B cell (primary cell): ENCODE measurements at regions of chr11 and their contacts with region 1.

Region 1: GRCh38 chr11:13772223-13773046 is 104.0 kb downstream of the FAR1 start:
- DNase-seq: peak; percentile 79
- ATAC-seq: peak; percentile 65
- H3K4me3 ChIP-seq: no peak overlapping the region
- H3K4me3 Mint-ChIP-seq: no peak overlapping the region
- H3K27ac ChIP-seq: no peak overlapping the region
- H3K27ac Mint-ChIP-seq: no peak overlapping the region
- H3K4me1 ChIP-seq: peaks cover 0 to 7% of the 10 kb centered on the region in 2 donors
- H3K4me1 Mint-ChIP-seq: peaks cover 6% of the 10 kb centered on the region
- H3K27me3 ChIP-seq: peaks cover 0 to 4% (median 0%) of the 10 kb centered on the region in 4 experiments
- H3K27me3 Mint-ChIP-seq: peaks cover 17% of the 10 kb centered on the region
- CTCF ChIP-seq: peak; percentile 79

Region 2: DNA sequence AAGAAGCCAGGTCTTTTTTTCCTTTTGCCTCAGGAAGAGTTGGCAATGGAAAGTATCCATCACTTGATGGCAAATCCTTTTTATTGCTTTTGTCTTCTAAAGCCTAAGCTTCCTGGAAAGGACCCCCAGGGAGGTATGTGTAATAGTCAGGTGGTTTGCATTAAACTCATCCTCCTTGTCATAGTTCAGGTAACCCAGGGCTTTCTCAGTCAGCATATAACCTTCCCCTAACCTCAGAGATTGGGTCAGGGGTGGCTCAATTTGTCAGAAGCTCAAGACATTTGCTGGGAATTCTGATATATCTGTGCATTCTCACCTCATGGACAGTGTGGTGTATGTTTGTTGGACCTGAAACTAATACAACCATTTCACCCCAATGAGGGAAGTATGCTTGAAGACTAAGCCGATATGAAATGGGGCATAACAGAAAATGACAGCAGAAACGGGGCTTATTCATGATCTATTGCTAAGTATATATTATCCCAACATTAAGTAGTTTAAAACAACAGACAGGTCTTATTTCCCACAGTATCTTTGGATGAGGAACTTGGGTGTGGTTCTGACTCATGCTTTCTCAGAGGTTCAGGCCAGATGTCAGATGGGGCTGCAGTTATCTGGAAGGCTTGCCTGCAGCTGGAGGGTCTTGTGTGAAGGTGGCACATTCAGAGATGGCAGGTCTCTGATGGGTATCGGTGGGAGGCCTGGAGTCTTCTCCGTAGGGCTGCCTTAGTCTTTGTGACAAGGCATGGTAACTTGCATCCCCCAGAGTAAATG is 54.3 kb after region 1 on chr11:
- CTCF ChIA-PET with region 1: no interaction called
- POLR2A ChIA-PET with region 1: no interaction called
- intact Hi-C with region 1: no loop called
- DNase-seq: no peak
- ATAC-seq: no peak
- H3K4me3 ChIP-seq: no peak overlapping the region
- H3K4me3 Mint-ChIP-seq: no peak overlapping the region
- H3K27ac ChIP-seq: no peak overlapping the region
- H3K27ac Mint-ChIP-seq: no peak overlapping the region
- H3K4me1 ChIP-seq: no peaks in the 10 kb centered on the region
- H3K4me1 Mint-ChIP-seq: no peaks in the 10 kb centered on the region
- H3K27me3 ChIP-seq: no peaks in the 10 kb centered on the region
- H3K27me3 Mint-ChIP-seq: peaks cover 22% of the 10 kb centered on the region
- CTCF ChIP-seq: no peak

Region 3: DNA sequence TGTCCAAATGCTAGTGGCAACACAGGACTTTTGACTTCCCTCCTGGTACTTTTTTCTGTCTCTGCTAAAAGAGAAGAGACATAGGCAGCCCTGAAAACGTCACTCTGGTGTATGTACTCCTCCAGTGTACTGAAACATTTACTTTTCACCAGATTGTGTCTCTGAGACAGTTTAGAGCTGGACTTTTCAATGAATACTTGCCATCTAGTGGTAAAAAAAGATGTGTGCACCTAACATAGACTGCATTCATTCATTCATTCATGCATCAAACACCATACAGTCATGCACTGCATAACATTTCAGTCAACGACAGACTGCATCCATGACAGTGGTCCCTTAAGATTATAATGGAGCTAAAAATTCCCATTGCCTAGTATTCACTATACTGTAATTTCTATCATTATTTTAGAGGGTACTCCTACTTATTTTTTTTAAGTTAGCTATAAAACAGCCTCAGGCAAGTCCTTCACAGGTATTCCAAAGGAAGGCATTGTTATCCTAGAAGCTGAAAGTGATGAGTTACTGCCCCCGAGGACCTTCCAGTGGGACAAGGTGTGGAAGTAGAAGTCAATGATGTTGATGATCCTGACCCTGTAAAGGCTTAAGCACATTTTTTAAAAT is 376.3 kb after region 1 on chr11:
- CTCF ChIA-PET with region 1: interaction called, 35 read pairs
- POLR2A ChIA-PET with region 1: no interaction called
- intact Hi-C with region 1: loop called (anchors 1 kb)
- DNase-seq: peak; percentile 30
- ATAC-seq: peak; percentile 14
- H3K4me3 ChIP-seq: no peak overlapping the region
- H3K4me3 Mint-ChIP-seq: no peak overlapping the region
- H3K27ac ChIP-seq: no peak overlapping the region
- H3K27ac Mint-ChIP-seq: no peak overlapping the region
- H3K4me1 ChIP-seq: no peaks in the 10 kb centered on the region
- H3K4me1 Mint-ChIP-seq: no peaks in the 10 kb centered on the region
- H3K27me3 ChIP-seq: peaks cover 0 to 4% (median 2%) of the 10 kb centered on the region in 4 experiments
- H3K27me3 Mint-ChIP-seq: peaks cover 23% of the 10 kb centered on the region
- CTCF ChIP-seq: peak; percentile 63

Region 4: DNA sequence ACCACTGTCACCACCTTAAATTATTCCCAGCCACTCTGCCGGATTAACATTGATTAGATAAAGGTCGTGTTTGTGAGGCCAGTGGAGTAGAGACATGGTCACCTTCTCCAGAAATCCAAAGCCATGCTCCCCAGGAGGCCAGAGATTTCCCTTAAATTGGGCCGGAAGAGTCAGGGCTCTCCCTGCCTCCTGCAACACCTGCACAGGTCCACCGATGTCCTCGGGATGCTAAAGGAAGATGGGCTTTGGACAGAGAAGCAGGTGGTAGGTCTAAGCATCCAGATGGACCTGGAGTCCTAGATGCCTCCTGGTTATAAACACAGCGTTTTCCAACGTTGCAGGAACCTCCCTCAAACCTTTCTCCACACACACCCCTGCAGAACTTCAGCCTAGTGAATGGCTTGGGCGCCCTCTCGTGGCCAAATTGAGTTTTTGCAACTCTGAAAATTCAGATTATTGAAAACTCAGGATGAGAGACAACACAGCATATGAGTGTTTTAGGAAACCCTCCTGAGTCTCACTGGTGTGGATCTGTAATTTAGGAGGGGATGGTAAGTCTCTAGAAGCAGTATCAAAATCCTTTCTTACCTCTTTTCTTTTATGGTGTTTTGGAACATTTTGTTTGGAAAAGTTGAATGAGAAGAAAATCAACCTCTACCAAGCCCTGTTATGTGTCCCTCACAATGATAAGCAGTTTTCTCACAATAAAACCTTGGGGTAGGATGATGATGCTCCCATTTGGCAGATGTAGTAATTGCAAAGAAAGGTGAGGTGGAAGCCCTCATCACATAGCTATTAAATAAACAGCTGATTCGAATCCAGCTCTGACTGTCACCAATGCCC is 476.9 kb after region 1 on chr11:
- CTCF ChIA-PET with region 1: interaction called, 40 read pairs
- POLR2A ChIA-PET with region 1: no interaction called
- intact Hi-C with region 1: loop called (anchors 1 kb)
- DNase-seq: peak; percentile 77
- ATAC-seq: peak; percentile 53
- H3K4me3 ChIP-seq: peak overlapping the region in 2 of 5 experiments; percentile 27
- H3K4me3 Mint-ChIP-seq: peak overlapping the region; percentile 50
- H3K27ac ChIP-seq: no peak overlapping the region
- H3K27ac Mint-ChIP-seq: no peak overlapping the region
- H3K4me1 ChIP-seq: peaks cover 10 to 11% of the 10 kb centered on the region in 2 donors
- H3K4me1 Mint-ChIP-seq: peaks cover 19% of the 10 kb centered on the region
- H3K27me3 ChIP-seq: peaks cover 0 to 18% (median 7%) of the 10 kb centered on the region in 4 experiments
- H3K27me3 Mint-ChIP-seq: peaks cover 30% of the 10 kb centered on the region
- CTCF ChIP-seq: peak; percentile 98